Heart right ventricle (tissue), 16 donors: ENCODE measurements at regions of chr9 and their contacts with region 1.

Region 1: GRCh38 chr9:37963936-37964739 is 60.2 kb upstream of the SLC25A51 start:
- DNase-seq: no peak
- ATAC-seq: peak in 6 of 8 donors; percentile 11 to 67 (median 35)
- H3K4me3 ChIP-seq: no peak overlapping the region
- H3K27ac ChIP-seq: peak overlapping the region in 2 of 10 donors; percentile 31 to 64
- H3K4me1 ChIP-seq: peaks cover 2 to 52% (median 34%) of the 10 kb centered on the region in 9 donors
- H3K27me3 ChIP-seq: no peaks in the 10 kb centered on the region
- CTCF ChIP-seq: no peak

Region 2: GRCh38 chr9:38026021-38026809 is 62.1 kb after region 1 on chr9:
- intact Hi-C with region 1: loop called in 1 of 10 experiments (anchors 10 kb)
- DNase-seq: peak; percentile 35 to 59
- ATAC-seq: peak; percentile 65 to 82 (median 73)
- H3K4me3 ChIP-seq: peak overlapping the region in 1 of 10 donors; percentile 2
- H3K27ac ChIP-seq: peak overlapping the region; percentile 64 to 89 (median 78)
- H3K4me1 ChIP-seq: peaks cover 39 to 80% (median 53%) of the 10 kb centered on the region in 9 donors
- H3K27me3 ChIP-seq: no peaks in the 10 kb centered on the region
- CTCF ChIP-seq: no peak

Region 3: GRCh38 chr9:38178237-38178636 is 214.1 kb after region 1 on chr9:
- intact Hi-C with region 1: no loop called
- DNase-seq: no peak
- ATAC-seq: no peak
- H3K4me3 ChIP-seq: no peak overlapping the region
- H3K27ac ChIP-seq: no peak overlapping the region
- H3K4me1 ChIP-seq: peaks cover 0 to 5% (median 1%) of the 10 kb centered on the region in 9 donors
- H3K27me3 ChIP-seq: peaks cover 0 to 12% (median 0%) of the 10 kb centered on the region in 7 donors
- CTCF ChIP-seq: no peak